Activated T-helper 1 cell treated with anti-CD3 and anti-CD28 coated beads, Interleukin-12 subunit alpha, Interleukin-12 subunit beta, Interleukin-2, Interleukin-4 antibody, amounts not matched to agents 30 ng/mL and 10 ng/mL and 1 ng/mL, durations not matched to agents 14 hours and 24 hours and 36 hours (primary cell): ENCODE measurements at regions of chr3 and their contacts with region 1.

Region 1: DNA sequence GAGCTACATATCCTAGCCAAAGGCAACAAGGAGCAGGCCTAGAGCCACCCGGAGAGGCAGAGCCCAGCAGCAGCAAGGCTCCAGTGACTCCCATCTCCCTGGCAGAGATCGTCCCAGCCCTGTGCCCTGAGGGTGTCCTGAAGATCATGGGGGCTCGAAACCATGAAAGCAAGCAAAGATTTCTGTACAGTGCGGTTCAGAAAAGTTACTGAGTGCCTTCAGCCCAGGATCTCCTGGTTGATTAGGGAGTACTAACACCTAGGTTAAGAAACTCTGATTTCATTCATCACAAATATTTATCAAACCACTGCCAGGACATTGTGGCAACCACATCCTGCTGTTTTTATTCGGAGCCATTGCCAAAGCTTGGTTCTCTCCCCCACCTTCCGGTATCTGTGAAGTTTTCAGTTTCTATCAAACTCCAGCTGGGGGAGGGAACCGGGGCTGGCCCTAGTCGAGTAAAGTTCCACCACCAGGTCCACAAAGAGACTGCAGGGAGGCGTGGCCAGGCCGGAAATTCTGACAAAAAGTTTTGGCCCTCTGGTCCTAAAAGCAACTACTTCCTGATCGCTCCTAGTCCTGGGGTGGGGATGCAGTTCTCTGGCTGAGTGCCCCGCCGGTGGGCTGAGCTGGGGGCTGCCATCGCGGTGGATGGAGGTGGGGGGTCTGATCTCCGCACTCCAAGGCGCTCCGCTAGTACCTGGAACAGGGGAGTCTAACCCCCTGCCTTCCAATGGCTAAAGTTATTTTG is 1.2 kb downstream of the RAB43 start:
- DNase-seq: peak; percentile 90
- H3K4me3 Mint-ChIP-seq: peak overlapping the region; percentile 94
- H3K27ac Mint-ChIP-seq: peak overlapping the region; percentile 99
- H3K4me1 Mint-ChIP-seq: peaks cover 61% of the 10 kb centered on the region
- H3K27me3 Mint-ChIP-seq: no peaks in the 10 kb centered on the region

Region 2: GRCh38 chr3:128787256-128788240 is 332.9 kb before region 1 on chr3:
- intact Hi-C with region 1: loop called (anchors 2 kb)
- DNase-seq: no peak
- H3K4me3 Mint-ChIP-seq: peak overlapping the region; percentile 70
- H3K27ac Mint-ChIP-seq: peak overlapping the region; percentile 97
- H3K4me1 Mint-ChIP-seq: peaks cover 83% of the 10 kb centered on the region
- H3K27me3 Mint-ChIP-seq: no peaks in the 10 kb centered on the region

Region 3: DNA sequence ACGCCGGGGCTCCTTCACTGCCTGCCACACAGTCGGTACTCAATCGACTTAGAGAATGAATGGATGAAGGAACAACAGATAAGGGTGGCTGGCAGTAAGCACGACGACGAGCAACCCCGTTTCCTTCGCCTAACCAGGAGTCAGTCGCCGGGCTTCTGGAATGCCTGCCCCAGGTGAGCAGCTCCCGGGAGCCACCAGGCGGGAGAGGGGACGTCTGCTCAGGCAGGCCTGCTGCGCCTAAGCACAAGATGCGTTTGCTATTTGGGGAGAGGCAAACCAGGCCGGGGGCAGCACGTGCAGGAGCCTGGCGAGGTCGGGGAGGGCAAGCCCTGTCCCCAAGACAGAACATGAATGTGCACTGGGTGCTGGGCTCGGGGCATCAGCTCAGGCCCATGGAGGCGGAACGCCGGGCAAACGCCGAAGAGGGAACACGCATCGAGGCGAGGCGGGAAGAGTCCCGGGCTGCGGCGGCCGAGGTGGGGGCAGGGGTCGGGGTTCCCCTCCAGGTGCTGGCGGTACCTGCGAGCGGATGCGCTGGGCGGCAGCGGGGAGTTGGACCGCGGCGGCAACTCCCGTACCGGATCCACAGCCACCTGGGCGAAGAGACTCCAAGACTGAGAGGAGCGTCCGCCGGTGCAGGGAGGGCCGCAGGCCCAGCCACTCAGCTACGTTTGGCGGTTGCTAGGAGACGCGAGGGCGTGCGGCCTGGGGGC is 126.8 kb before region 1 on chr3 and contains the start of gene CFAP92:
- intact Hi-C with region 1: loop called (anchors 1 kb)
- DNase-seq: peak; percentile 90
- H3K4me3 Mint-ChIP-seq: peak within 1 kb of the TSS; percentile 72
- H3K27ac Mint-ChIP-seq: peak within 1 kb of the TSS; percentile 43
- H3K4me1 Mint-ChIP-seq: peaks cover 36% of the 10 kb centered on the region
- H3K27me3 Mint-ChIP-seq: peaks cover 14% of the 10 kb centered on the region
- total RNA-seq, gene CFAP92: 0.13 and 0.29 TPM in 2 replicates

Region 4: DNA sequence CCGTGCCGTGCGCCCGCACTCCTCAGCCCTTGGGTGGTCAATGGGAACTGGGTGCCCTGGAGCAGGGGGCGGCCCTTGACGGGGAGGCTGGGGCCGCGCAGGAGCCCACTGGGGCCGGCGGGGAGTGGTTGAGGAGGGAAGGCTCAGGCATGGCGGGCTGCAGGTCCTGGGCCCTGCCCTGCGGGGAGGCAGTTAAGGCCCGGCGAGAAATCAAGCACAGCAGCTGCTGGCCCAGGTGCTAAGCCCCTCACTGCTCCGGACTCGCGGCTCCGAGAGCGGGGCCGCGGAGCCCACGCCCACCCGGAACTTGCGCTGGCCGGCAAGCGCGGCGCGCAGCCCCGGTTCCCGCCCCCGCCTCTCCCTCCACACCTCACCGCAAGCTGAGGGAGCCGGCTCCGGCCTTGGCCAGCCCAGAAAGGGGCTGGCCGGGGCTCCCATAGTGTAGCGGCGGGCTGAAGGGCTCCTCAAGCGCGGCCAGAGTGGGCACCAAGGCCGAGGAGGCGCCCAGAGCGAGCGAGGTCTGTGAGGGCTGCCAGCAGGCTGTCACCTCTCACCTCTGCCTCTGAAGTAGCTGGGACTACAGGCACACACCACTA is 52.0 kb before region 1 on chr3:
- intact Hi-C with region 1: loop called (anchors 5 kb)
- DNase-seq: no peak
- H3K4me3 Mint-ChIP-seq: peak overlapping the region; percentile 67
- H3K27ac Mint-ChIP-seq: no peak overlapping the region
- H3K4me1 Mint-ChIP-seq: peaks cover 5% of the 10 kb centered on the region
- H3K27me3 Mint-ChIP-seq: peaks cover 11% of the 10 kb centered on the region

Region 5: GRCh38 chr3:129183569-129184395 is 63.4 kb after region 1 on chr3 and contains the start of gene CNBP:
- intact Hi-C with region 1: loop called (anchors 1 kb)
- DNase-seq: peak; percentile 91
- H3K4me3 Mint-ChIP-seq: peak within 1 kb of the TSS; percentile 97
- H3K27ac Mint-ChIP-seq: peak within 1 kb of the TSS; percentile 98
- H3K4me1 Mint-ChIP-seq: peaks cover 35% of the 10 kb centered on the region
- H3K27me3 Mint-ChIP-seq: no peaks in the 10 kb centered on the region
- total RNA-seq, gene CNBP: 408 and 425 TPM in 2 replicates

Region 6: GRCh38 chr3:129278439-129278970 is 158.1 kb after region 1 on chr3 and contains the start of gene HMCES:
- intact Hi-C with region 1: loop called (anchors 1 kb)
- DNase-seq: peak; percentile 92
- H3K4me3 Mint-ChIP-seq: peak within 1 kb of the TSS; percentile 93
- H3K27ac Mint-ChIP-seq: peak within 1 kb of the TSS; percentile 97
- H3K4me1 Mint-ChIP-seq: peaks cover 48% of the 10 kb centered on the region
- H3K27me3 Mint-ChIP-seq: no peaks in the 10 kb centered on the region
- total RNA-seq, gene HMCES: 59.4 and 61.6 TPM in 2 replicates